ENCODE measurements at regions of chr22 and their contacts with region 1.

Region 1: GRCh38 chr22:36528795-36529751 is at the start of gene EIF3D:
- DNase-seq: peak; percentile 100

Region 2: GRCh38 chr22:36419177-36419911 is 109.7 kb before region 1 on chr22:
- in situ Hi-C with region 1: no loop called
- DNase-seq: no peak

Region 3: DNA sequence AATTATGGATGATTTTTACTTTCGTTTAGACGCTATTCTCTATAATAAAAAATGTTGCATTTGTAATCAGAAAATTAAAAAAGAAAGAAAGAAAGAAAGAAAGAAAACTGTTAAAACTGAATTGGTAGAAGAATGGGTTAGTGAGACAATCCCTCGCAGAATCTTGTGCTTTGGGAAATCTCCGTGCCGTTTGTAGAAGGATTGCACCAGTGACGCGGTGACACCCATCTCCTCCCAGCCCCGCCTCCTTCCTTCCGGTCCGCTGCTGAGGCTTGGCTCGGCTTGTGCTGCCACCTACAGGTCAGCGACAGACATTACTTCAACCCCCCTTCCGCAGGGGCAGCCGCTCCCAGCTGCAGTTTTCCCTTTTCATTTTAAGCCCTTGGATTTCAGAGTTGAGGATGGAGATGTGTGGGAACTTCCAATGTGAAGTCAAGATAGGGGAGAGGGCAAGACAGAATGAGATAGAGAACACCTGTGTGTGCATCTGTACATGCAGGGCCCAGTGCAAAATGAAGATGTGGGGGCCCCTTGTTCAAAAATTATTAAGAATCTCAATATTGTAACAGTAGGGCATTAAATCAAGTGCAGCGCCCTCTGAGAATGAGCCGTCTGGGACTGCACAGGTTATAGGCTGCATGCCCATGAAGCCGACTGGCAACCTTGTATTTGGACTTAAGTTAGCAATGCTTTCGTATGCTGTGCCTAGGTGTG is 449.0 kb after region 1 on chr22:
- in situ Hi-C with region 1: loop called (anchors 25 kb)
- DNase-seq: peak; percentile 83

Measured in KBM-7 (cell line).